ENCODE measurements at regions of chr13 and their contacts with region 1.

Region 1: GRCh38 chr13:73708393-73708985 is 425.7 kb downstream of the KLF12 start:
- DNase-seq: peak; percentile 49 to 65
- H3K4me3 ChIP-seq: no peak overlapping the region
- H3K27ac ChIP-seq: no peak overlapping the region
- H3K4me1 ChIP-seq: no peaks in the 10 kb centered on the region
- H3K27me3 ChIP-seq: no peaks in the 10 kb centered on the region
- CTCF ChIP-seq: peak; percentile 95

Region 2: GRCh38 chr13:72808917-72809500 is 899.5 kb before region 1 on chr13:
- CTCF ChIA-PET with region 1: interaction called, 10 read pairs
- POLR2A ChIA-PET with region 1: no interaction called
- intact Hi-C with region 1: no loop called
- DNase-seq: no peak
- H3K4me3 ChIP-seq: no peak overlapping the region
- H3K27ac ChIP-seq: peak overlapping the region; percentile 38
- H3K4me1 ChIP-seq: peaks cover 10% of the 10 kb centered on the region; the same call in 1 of the 2 replicates
- H3K27me3 ChIP-seq: no peaks in the 10 kb centered on the region
- CTCF ChIP-seq: peak; percentile 84

Region 3: GRCh38 chr13:72963762-72964161 is 744.7 kb before region 1 on chr13:
- CTCF ChIA-PET with region 1: no interaction called
- POLR2A ChIA-PET with region 1: no interaction called
- intact Hi-C with region 1: loop called (anchors 10 kb)
- DNase-seq: no peak
- H3K4me3 ChIP-seq: no peak overlapping the region
- H3K27ac ChIP-seq: no peak overlapping the region
- H3K4me1 ChIP-seq: peaks cover 30% of the 10 kb centered on the region
- H3K27me3 ChIP-seq: no peaks in the 10 kb centered on the region
- CTCF ChIP-seq: no peak

Region 4: GRCh38 chr13:73248711-73249578 is 459.5 kb before region 1 on chr13:
- CTCF ChIA-PET with region 1: no interaction called
- POLR2A ChIA-PET with region 1: no interaction called
- intact Hi-C with region 1: loop called (anchors 10 kb)
- DNase-seq: peak; percentile 60 to 89
- H3K4me3 ChIP-seq: peak overlapping the region; percentile 3; the same call in 1 of the 2 replicates
- H3K27ac ChIP-seq: peak overlapping the region; percentile 71
- H3K4me1 ChIP-seq: peaks cover 22% of the 10 kb centered on the region
- H3K27me3 ChIP-seq: no peaks in the 10 kb centered on the region
- CTCF ChIP-seq: no peak

Region 5: DNA sequence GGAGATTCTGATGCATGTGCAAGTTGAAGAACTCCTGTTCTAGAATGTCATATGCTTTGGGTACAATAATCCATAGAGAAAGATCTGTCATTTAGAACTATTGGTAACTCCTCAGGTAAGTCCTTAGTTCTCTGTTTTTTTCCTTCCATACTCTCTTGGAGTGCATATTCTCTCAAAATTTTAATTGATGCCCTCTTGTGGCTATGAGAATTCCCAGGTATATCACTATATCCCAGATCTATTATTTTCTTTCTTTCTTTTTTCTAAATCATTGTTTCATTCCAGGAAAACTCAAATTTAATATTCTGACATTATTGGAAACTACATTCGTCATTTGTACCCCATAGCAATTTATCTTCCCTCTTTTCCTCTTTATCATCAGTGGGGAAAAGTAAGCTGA is 164.3 kb before region 1 on chr13:
- CTCF ChIA-PET with region 1: no interaction called
- POLR2A ChIA-PET with region 1: no interaction called
- intact Hi-C with region 1: loop called (anchors 5 kb)
- DNase-seq: no peak
- H3K4me3 ChIP-seq: no peak overlapping the region
- H3K27ac ChIP-seq: no peak overlapping the region
- H3K4me1 ChIP-seq: peaks cover 14% of the 10 kb centered on the region
- H3K27me3 ChIP-seq: no peaks in the 10 kb centered on the region
- CTCF ChIP-seq: peak; percentile 40; the same call in 1 of the 2 replicates

Measured in PC-9 (cell line).